ENCODE measurements at regions of chr2 and their contacts with region 1.

Region 1: DNA sequence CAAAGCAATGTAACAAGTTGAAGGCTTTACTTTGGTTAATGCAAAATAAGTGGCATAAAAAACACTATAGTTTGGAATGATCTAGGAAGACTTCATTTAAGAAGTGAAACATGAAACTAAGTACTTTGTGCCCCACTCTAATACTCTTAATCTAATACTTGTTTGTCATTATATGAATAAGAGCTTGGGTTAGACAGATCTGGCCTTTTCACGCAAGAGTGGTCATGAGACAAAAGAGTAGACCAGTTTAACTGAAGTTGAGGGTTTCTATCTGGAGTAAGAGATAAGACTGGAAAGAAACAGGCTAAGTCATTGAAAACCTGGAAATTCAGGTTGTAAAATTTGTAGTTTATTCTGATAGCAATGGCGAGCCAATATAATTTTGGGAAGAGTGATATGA is 2.8 kb downstream of the SLC30A6 start:
- DNase-seq: no peak
- H3K4me3 ChIP-seq: no peak overlapping the region
- H3K27ac ChIP-seq: no peak overlapping the region
- H3K4me1 ChIP-seq: no peaks in the 10 kb centered on the region
- H3K27me3 ChIP-seq: no peaks in the 10 kb centered on the region
- CTCF ChIP-seq: no peak

Region 2: GRCh38 chr2:32010670-32011484 is 157.6 kb before region 1 on chr2 and contains the start of gene MEMO1:
- CTCF ChIA-PET with region 1: no interaction called
- dilution Hi-C with region 1: no loop called
- in situ Hi-C with region 1: no loop called
- intact Hi-C with region 1: loop called (anchors 5 kb)
- DNase-seq: peak; percentile 93
- H3K4me3 ChIP-seq: peak within 1 kb of the TSS; percentile 86 to 98 (median 96)
- H3K27ac ChIP-seq: peak within 1 kb of the TSS; percentile 47
- H3K4me1 ChIP-seq: peaks cover 11% of the 10 kb centered on the region
- H3K27me3 ChIP-seq: no peaks in the 10 kb centered on the region
- CTCF ChIP-seq: peak in 1 of 2 donors; percentile 20
- total RNA-seq, gene MEMO1: 47.8 to 75.3 TPM

Region 3: DNA sequence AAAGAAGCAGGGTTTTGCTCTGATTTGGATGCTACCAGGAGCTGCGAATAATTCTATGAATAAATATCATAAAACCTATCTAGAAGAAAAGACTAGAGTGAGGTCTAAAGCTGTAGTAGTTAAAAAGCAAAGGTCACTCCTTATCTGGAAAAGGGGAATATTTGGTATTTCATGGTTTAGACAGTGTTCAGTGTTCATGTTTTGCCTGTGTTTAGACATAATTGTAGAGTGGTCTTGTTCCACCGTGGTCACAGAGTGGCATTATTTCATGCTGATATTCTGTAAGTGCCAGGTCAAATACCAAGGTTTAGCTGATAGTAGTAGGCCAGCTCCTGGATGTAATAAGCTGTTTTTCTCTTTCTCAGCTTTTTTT is 94.4 kb before region 1 on chr2:
- CTCF ChIA-PET with region 1: no interaction called
- dilution Hi-C with region 1: no loop called
- in situ Hi-C with region 1: no loop called
- intact Hi-C with region 1: no loop called
- DNase-seq: no peak
- H3K4me3 ChIP-seq: no peak overlapping the region
- H3K27ac ChIP-seq: no peak overlapping the region
- H3K4me1 ChIP-seq: no peaks in the 10 kb centered on the region
- H3K27me3 ChIP-seq: no peaks in the 10 kb centered on the region
- CTCF ChIP-seq: no peak

Region 4: DNA sequence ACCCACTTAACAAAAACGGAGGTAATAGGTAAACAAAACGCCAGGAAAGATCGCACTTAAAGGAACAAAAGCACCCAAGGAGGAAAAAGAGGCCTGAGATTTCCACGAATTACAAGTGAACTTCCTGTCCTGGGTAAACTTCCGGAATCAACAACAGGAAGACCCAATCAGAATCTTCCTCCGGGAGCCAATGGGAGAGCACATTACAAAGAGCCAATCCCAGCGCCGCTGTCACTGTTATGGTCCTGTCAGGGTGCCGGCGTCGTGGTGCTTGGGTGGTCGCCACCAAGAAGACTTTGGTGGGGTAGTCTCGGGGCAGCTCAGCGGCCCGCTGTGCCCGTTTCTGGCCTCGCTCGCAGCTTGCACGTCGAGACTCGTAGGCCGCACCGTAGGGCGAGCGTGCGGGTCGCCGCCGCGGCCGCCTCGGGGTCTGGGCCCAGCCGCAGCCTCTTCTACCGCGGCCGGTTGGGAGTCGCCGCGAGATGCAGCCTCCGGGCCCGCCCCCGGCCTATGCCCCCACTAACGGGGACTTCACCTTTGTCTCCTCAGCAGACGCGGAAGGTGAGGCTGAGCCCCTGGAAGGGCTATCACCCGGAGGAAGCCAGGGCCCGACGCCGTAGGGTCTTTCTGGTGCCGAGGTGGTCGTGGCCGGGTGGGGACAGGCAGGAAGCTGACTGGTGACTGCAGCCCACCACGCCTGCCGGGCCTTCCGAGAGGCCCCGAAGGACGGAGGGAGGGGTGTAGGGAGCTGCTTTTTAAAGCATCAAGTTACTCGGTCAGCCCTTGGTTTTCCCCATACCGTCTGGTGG is 109.4 kb after region 1 on chr2 and contains the start of gene YIPF4:
- CTCF ChIA-PET with region 1: no interaction called
- dilution Hi-C with region 1: no loop called
- in situ Hi-C with region 1: no loop called
- intact Hi-C with region 1: loop called (anchors 5 kb)
- DNase-seq: peak; percentile 83
- H3K4me3 ChIP-seq: peak within 1 kb of the TSS; percentile 80 to 97 (median 84)
- H3K27ac ChIP-seq: peak within 1 kb of the TSS; percentile 69
- H3K4me1 ChIP-seq: peaks cover 6% of the 10 kb centered on the region
- H3K27me3 ChIP-seq: no peaks in the 10 kb centered on the region
- CTCF ChIP-seq: no peak
- total RNA-seq, gene YIPF4: 17.8 to 45.8 TPM

Region 5: GRCh38 chr2:32330136-32330535 is 161.6 kb after region 1 on chr2:
- CTCF ChIA-PET with region 1: no interaction called
- dilution Hi-C with region 1: no loop called
- in situ Hi-C with region 1: no loop called
- intact Hi-C with region 1: loop called (anchors 5 kb)
- DNase-seq: no peak
- H3K4me3 ChIP-seq: no peak overlapping the region
- H3K27ac ChIP-seq: no peak overlapping the region
- H3K4me1 ChIP-seq: no peaks in the 10 kb centered on the region
- H3K27me3 ChIP-seq: no peaks in the 10 kb centered on the region
- CTCF ChIP-seq: no peak

Region 6: DNA sequence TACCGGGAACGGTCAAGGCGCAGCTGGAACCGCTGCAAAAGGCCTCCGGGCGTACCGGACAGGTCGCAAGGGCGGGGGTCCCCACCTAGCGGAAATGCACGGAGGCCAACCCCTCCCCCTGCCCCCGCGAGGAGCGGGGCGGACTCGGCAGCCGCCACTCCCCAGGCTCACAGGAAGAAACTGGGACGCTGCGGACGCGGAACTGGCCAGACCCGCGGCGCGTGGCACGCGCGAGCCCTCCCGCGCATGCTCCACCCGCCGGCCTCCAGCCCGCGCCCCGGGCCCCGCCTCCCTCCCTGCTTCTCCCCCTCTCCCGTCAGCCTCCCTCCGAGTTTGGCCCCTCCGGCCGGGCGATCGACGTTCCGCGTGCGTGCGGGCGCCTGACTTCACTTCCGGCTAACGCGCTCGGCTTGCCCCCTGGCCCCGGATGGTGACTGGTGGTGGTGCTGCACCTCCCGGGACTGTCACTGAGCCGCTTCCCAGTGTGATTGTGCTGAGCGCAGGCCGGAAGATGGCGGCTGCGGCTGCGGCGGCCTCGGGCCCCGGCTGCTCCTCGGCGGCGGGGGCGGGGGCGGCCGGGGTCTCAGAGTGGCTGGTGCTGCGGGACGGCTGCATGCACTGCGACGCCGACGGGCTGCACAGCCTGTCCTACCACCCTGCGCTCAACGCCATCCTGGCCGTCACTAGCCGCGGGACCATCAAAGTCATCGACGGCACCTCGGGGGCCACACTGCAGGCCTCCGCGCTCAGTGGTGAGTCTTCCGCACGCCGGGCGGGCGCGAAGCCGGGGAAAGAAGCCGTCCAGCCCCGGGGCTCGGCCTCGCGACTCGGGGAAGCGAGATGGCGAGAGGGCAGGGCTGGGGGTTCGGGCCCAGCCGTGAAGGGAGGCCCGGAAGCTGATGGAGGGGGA is 188.5 kb after region 1 on chr2 and contains the start of gene BIRC6:
- CTCF ChIA-PET with region 1: no interaction called
- dilution Hi-C with region 1: no loop called
- in situ Hi-C with region 1: no loop called
- intact Hi-C with region 1: loop called (anchors 2 kb)
- DNase-seq: peak; percentile 97
- H3K4me3 ChIP-seq: peak within 1 kb of the TSS; percentile 99 to 100 (median 100)
- H3K27ac ChIP-seq: peak within 1 kb of the TSS; percentile 83
- H3K4me1 ChIP-seq: peaks cover 9% of the 10 kb centered on the region
- H3K27me3 ChIP-seq: no peaks in the 10 kb centered on the region
- CTCF ChIP-seq: no peak
- total RNA-seq, gene BIRC6: 82.0 to 169 TPM

Measured in mammary epithelial cell (primary cell).